ENCODE measurements at regions of chr3 and their contacts with region 1.

Region 1: DNA sequence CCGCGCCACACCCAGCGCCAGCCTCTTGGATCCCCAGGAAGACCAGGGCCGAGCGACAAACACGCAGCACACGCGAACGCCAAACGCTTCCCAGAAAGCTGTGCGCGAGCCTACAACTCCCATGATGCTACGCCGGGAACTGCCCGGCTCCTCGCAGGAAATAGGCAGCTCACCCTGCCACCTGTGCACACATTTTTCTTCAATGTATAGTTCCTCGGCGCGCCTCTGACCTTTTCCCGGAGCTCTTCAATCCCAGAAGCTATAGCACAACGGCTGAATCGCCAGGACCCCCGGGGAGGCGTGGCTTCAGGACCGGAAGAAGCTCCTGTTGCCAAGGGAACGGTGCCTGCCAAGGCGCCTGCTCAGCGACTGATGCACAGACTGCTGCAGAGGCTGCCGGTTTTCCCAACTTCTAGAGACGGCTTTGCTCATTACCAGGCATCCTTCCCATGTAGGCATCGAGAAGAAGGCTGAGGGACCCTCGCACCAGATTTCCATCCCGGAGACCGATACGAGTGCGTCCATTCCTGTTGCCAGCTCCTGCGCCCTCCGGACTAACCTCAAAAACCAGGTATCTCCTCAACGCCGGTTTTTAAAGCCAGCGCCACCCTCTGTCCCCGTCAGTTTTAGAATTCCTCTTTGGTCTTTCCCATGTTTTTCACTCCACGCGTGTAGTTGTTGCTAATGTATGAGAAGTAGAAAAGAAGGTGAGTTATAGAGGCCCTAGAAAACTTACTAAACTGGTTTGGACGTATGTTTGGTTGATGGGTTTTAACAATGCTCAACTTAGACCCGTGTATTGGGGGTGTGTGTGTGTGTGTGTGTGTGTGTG is at the start of gene ARL6:
- DNase-seq: peak; percentile 38 to 85 (median 60)
- ATAC-seq: peak; percentile 91
- H3K4me3 ChIP-seq: peak within 1 kb of the TSS; percentile 87
- H3K4me3 Mint-ChIP-seq: peak within 1 kb of the TSS; percentile 96
- H3K27ac ChIP-seq: peak within 1 kb of the TSS; percentile 62 to 76
- H3K27ac Mint-ChIP-seq: peak within 1 kb of the TSS; percentile 87
- H3K4me1 ChIP-seq: peaks cover 9% of the 10 kb centered on the region
- H3K4me1 Mint-ChIP-seq: peaks cover 39% of the 10 kb centered on the region
- H3K27me3 ChIP-seq: no peaks in the 10 kb centered on the region
- H3K27me3 Mint-ChIP-seq: no peaks in the 10 kb centered on the region
- CTCF ChIP-seq: no peak
- total RNA-seq, gene ARL6: 1.3 to 2.1 TPM

Region 2: GRCh38 chr3:95781598-95781997 is 1983.0 kb before region 1 on chr3:
- CTCF ChIA-PET with region 1: no interaction called
- POLR2A ChIA-PET with region 1: no interaction called
- intact Hi-C with region 1: no loop called
- DNase-seq: no peak
- ATAC-seq: no peak
- H3K4me3 ChIP-seq: no peak overlapping the region
- H3K4me3 Mint-ChIP-seq: no peak overlapping the region
- H3K27ac ChIP-seq: no peak overlapping the region
- H3K27ac Mint-ChIP-seq: no peak overlapping the region
- H3K4me1 ChIP-seq: no peaks in the 10 kb centered on the region
- H3K4me1 Mint-ChIP-seq: no peaks in the 10 kb centered on the region
- H3K27me3 ChIP-seq: no peaks in the 10 kb centered on the region
- H3K27me3 Mint-ChIP-seq: no peaks in the 10 kb centered on the region
- CTCF ChIP-seq: no peak

Region 3: GRCh38 chr3:98893740-98894139 is 1129.1 kb after region 1 on chr3:
- CTCF ChIA-PET with region 1: no interaction called
- POLR2A ChIA-PET with region 1: no interaction called
- intact Hi-C with region 1: loop called in 1 of 2 experiments (anchors 10 kb)
- DNase-seq: no peak
- ATAC-seq: no peak
- H3K4me3 ChIP-seq: no peak overlapping the region
- H3K4me3 Mint-ChIP-seq: no peak overlapping the region
- H3K27ac ChIP-seq: no peak overlapping the region
- H3K27ac Mint-ChIP-seq: no peak overlapping the region
- H3K4me1 ChIP-seq: no peaks in the 10 kb centered on the region
- H3K4me1 Mint-ChIP-seq: no peaks in the 10 kb centered on the region
- H3K27me3 ChIP-seq: no peaks in the 10 kb centered on the region
- H3K27me3 Mint-ChIP-seq: no peaks in the 10 kb centered on the region
- CTCF ChIP-seq: no peak

Measured in CD4-positive, alpha-beta T cell (primary cell).